Posterior cingulate gyrus (tissue), 11 donors: ENCODE measurements at regions of chr4 and their contacts with region 1.

Region 1: DNA sequence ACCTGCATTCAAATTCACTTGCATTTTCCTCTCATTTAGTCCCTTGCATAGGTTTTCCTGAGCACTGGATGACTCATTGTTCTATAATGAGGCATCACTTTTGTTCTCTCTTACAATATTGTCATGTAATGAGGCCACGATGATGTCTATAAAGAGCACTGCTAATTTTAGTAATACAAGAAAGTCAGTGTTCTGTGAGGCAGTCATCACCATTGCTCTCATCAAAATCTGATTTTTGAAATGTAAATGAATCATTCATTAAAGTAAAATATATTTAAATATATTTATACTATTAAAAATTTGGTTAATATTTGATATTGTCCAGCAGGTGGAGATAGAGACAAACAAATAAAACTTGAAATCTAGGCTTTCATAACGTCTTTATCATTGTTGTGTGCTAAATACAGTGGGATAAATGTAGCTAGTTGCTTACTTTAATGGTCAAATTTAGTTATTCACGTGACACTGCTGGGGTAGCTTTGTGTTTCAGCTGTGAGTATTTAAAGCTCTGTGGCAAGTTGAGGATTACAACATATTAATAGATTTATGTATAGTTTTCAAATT is 15.4 kb downstream of the HMGB2 start:
- DNase-seq: no peak

Region 2: DNA sequence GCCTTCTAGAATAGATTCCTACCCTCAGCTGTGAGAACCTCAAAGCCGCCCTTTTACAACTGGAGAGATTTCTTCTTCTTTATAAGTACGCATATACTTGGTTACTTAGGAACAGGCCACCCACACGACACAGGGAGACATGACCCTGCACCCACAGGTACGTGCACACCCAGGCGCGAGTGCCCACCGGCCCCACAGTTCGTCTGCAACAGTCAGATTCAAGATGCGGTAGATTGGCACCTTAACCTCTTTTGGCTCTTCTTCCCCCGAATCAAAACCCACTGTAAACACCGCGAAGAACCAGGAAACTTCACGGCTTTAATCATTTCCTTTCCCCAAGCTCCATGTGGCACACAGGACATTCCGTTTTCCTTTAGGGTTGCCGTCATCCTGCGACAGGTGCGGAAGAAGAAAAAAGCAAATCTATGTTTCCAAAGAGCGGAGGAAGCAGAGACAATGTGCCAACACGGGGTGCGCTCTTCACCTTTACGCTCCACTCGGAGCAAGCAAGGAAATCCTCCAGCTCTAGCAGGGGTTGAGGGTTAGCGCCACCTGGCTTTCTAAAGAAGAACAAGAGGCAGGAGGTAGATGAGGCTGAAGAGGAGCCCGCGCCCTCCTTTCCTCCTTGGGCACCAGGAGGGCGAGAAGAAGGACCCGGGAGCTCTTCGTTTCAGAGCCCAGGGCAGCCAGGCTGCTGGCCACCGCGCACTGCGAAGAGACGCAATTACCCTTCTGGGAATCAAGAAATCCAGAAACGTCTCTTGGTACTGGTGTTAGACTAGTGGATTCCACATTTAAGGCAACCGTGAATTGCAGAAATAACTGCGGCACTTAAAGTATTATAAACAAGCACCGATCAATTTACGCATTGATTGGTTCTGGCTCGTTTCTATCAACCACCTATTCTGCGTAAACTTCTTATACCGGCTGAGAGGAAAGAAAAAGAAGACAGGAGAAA is 175.6 kb after region 1 on chr4:
- intact Hi-C with region 1: loop called (anchors 5 kb)
- DNase-seq: peak in 8 of 10 donors; percentile 44 to 91 (median 60)

Region 3: DNA sequence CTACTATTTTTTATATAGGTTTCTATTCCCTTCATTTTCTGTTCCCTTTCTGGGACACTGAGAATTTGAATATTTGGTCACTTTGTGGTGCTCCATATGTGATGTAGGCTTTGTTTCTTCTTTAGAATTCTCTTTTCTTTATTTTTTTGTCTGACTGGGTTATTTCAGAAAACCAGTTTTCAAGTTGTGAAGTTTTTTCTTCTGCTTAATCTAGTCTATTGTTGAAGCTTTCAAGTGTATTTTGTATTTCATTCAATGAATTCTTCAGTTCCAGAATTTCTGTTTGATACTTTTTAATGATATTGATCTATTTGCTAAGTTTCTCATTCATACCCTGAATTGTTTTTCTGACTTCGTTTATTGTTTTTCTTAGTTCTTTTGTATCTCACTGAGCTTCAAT is 307.5 kb after region 1 on chr4:
- intact Hi-C with region 1: no loop called
- DNase-seq: no peak